CD4-positive, alpha-beta T cell (primary cell): ENCODE measurements at regions of chr9 and their contacts with region 1.

Region 1: GRCh38 chr9:121369595-121370265 is at the start of gene STOM:
- DNase-seq: peak in 12 of 14 experiments; percentile 47 to 89 (median 60)
- ATAC-seq: peak; percentile 52
- H3K4me3 ChIP-seq: peak within 1 kb of the TSS; percentile 98
- H3K4me3 Mint-ChIP-seq: peak within 1 kb of the TSS; percentile 89
- H3K27ac ChIP-seq: peak within 1 kb of the TSS; percentile 76 to 79
- H3K27ac Mint-ChIP-seq: peak within 1 kb of the TSS; percentile 89
- H3K4me1 ChIP-seq: peaks cover 16% of the 10 kb centered on the region
- H3K4me1 Mint-ChIP-seq: peaks cover 70% of the 10 kb centered on the region
- H3K27me3 ChIP-seq: no peaks in the 10 kb centered on the region
- H3K27me3 Mint-ChIP-seq: no peaks in the 10 kb centered on the region
- CTCF ChIP-seq: no peak
- total RNA-seq, gene STOM: 26.1 to 27.9 TPM

Region 2: DNA sequence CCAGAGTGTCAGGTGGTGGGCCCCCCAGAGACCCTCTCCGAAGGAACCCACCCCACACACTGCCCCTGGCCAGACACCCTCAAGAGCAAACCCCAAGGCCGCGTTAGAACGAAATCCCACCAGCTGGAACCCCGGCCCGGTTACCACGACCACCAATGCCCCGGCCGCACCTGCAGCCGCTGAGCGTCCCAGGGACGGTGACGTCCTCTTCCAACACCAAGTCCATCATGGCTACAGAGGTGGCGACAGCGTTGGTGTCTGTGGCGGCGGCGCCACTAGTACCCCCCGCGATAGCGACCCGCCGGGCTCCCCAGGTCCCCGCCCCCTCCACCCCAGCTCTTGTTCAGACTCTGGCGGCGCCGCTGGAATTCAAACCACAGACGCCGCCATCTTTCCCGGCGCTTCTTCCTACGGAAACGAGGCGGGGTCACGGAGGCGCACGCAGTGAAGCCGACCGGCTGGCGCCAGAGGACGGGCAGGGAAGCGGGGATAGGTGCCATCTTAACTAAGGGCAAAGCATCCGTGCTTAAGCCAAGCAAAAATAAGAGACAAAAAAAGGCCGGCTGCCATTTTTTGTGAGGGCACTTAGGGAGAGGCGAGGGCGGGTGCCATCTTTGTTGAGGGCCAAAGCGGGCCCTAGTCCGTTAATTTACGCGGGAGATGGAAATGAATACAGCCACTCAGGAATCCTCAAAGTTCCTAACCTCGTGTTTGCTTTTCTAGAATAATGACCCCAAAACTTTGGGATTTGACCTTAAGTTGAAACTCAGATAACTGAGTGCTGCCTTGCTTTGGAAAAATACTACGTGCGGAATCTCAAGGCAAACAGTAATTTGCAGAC is 789.8 kb before region 1 on chr9 and contains the start of gene CDK5RAP2:
- CTCF ChIA-PET with region 1: no interaction called
- POLR2A ChIA-PET with region 1: no interaction called
- intact Hi-C with region 1: loop called in 1 of 2 experiments (anchors 10 kb)
- DNase-seq: peak; percentile 84 to 98 (median 90)
- ATAC-seq: peak; percentile 98
- H3K4me3 ChIP-seq: peak within 1 kb of the TSS; percentile 84
- H3K4me3 Mint-ChIP-seq: peak within 1 kb of the TSS; percentile 99
- H3K27ac ChIP-seq: peak within 1 kb of the TSS; percentile 26 to 55
- H3K27ac Mint-ChIP-seq: peak within 1 kb of the TSS; percentile 92
- H3K4me1 ChIP-seq: peaks cover 29% of the 10 kb centered on the region
- H3K4me1 Mint-ChIP-seq: peaks cover 48% of the 10 kb centered on the region
- H3K27me3 ChIP-seq: no peaks in the 10 kb centered on the region
- H3K27me3 Mint-ChIP-seq: no peaks in the 10 kb centered on the region
- CTCF ChIP-seq: no peak
- total RNA-seq, gene CDK5RAP2: 55.0 to 56.0 TPM

Region 3: GRCh38 chr9:121098567-121099198 is 271.0 kb before region 1 on chr9:
- CTCF ChIA-PET with region 1: no interaction called
- POLR2A ChIA-PET with region 1: no interaction called
- intact Hi-C with region 1: no loop called
- DNase-seq: no peak
- ATAC-seq: no peak
- H3K4me3 ChIP-seq: no peak overlapping the region
- H3K4me3 Mint-ChIP-seq: no peak overlapping the region
- H3K27ac ChIP-seq: no peak overlapping the region
- H3K27ac Mint-ChIP-seq: no peak overlapping the region
- H3K4me1 ChIP-seq: no peaks in the 10 kb centered on the region
- H3K4me1 Mint-ChIP-seq: no peaks in the 10 kb centered on the region
- H3K27me3 ChIP-seq: no peaks in the 10 kb centered on the region
- H3K27me3 Mint-ChIP-seq: no peaks in the 10 kb centered on the region
- CTCF ChIP-seq: no peak

Region 4: GRCh38 chr9:121350993-121351561 is 18.7 kb before region 1 on chr9:
- CTCF ChIA-PET with region 1: interaction called, 5 read pairs
- POLR2A ChIA-PET with region 1: interaction called, 11 read pairs
- intact Hi-C with region 1: no loop called
- DNase-seq: no peak
- ATAC-seq: no peak
- H3K4me3 ChIP-seq: no peak overlapping the region
- H3K4me3 Mint-ChIP-seq: no peak overlapping the region
- H3K27ac ChIP-seq: no peak overlapping the region
- H3K27ac Mint-ChIP-seq: no peak overlapping the region
- H3K4me1 ChIP-seq: peaks cover 36% of the 10 kb centered on the region
- H3K4me1 Mint-ChIP-seq: peaks cover 19% of the 10 kb centered on the region
- H3K27me3 ChIP-seq: no peaks in the 10 kb centered on the region
- H3K27me3 Mint-ChIP-seq: no peaks in the 10 kb centered on the region
- CTCF ChIP-seq: no peak